Naive thymus-derived CD4-positive, alpha-beta T cell (primary cell): ENCODE measurements at regions of chr2 and their contacts with region 1.

Region 1: DNA sequence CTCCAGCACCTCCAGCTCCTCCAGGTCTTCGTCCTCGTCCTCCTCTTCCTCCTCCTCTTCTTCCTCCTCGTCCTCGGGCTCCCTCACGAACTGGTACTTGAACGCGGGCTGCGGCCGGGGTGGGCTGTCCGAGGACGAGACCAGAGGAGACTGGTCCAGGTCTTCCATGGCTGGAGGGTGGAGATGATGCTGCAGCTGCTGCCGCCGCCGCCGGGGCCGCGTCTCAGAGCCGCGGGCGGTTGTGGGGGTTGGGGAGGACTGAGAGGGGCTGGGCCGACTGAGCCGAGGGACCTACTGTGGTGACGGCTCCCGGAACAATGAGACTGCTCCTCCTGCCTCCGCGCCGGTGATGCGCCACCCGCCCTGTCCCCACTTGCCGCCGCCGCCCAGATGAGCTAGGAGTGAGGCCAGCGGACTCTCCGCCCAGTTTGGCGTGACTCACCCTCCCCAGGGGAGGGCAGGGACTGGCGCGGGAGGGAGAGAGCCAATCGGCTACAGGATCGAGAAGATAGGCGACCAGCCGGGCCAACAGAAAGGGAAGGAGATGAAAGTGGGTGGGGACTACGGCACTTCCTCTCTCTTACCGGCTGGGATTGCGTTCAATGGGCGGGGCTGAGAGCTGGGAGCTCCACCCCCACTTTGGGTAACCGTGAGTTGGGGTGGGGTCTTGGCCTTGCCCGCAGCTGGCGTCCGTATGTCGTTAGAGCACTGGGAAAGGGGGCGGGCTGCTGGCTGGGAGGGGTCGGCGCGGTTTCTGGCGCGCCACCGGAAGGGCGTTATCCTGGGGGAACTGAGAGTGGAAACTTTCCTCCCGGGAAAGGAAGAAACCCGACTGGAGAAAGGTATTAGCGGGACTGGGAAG is at the start of gene RTN4:
- DNase-seq: peak; percentile 89 to 99 (median 97)
- ATAC-seq: peak; percentile 94
- H3K4me3 ChIP-seq: peak within 1 kb of the TSS; percentile 93
- H3K4me3 Mint-ChIP-seq: peak within 1 kb of the TSS; percentile 97 to 100 (median 100)
- H3K27ac ChIP-seq: peak within 1 kb of the TSS; percentile 81
- H3K27ac Mint-ChIP-seq: peak within 1 kb of the TSS; percentile 97 to 100 (median 100)
- H3K4me1 ChIP-seq: peaks cover 31 to 38% of the 10 kb centered on the region in 2 donors
- H3K4me1 Mint-ChIP-seq: peaks cover 40 to 82% (median 68%) of the 10 kb centered on the region in 7 donors
- H3K27me3 ChIP-seq: no peaks in the 10 kb centered on the region
- H3K27me3 Mint-ChIP-seq: no peaks in the 10 kb centered on the region
- total RNA-seq, gene RTN4: 59.6 to 100 (median 65.1) TPM

Region 2: DNA sequence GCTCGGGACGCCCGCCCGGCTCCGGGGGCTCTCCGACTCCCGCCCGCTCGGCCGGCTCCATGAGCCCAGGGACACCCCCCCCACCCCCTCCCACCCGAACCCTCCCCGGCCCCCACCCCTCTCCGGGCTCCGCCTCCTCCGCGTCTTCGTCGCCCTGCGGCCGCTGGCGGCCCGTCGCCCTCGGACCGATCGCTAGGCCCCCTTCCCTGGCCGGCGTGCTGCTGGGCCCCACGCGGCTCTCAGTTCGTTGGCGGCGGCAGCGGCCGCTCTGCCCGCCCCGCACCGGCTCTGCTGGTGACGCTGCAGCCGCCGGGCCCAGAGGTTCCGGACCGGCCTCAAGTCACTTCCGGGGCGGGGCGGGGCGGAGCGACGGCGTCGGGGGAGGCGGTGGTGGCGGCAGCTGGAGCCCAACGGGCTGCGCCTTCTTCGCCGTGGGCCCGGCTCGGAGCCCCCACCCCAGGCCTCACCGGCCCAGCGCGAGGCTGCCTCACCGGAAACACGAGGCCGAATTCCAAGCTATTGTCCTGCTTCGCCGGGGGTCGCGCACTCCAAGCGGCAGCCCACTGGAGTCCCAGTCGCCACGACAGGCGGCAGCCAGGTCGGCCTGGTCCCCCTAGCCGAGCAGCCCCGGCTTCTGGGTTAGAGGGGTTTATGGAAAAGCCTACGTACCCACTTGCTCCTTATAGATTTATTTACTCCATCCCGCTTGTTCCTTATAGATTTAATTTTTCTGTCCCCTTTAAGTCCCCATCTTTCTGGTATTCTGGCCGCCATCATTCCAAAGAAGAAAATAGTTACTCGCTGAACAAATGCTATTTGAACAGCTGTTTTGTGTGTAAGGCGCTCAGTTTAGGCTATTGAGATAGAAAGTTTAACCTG is 1079.4 kb before region 1 on chr2 and contains the start of gene PSME4:
- CTCF ChIA-PET with region 1: no interaction called
- POLR2A ChIA-PET with region 1: interaction called, 3 read pairs
- intact Hi-C with region 1: loop called in 1 of 2 experiments (anchors 5 kb)
- DNase-seq: peak; percentile 80 to 95 (median 90)
- ATAC-seq: peak; percentile 97
- H3K4me3 ChIP-seq: peak within 1 kb of the TSS; percentile 84
- H3K4me3 Mint-ChIP-seq: peak within 1 kb of the TSS; percentile 89 to 100 (median 96)
- H3K27ac ChIP-seq: peak within 1 kb of the TSS; percentile 93
- H3K27ac Mint-ChIP-seq: peak within 1 kb of the TSS; percentile 91 to 99 (median 95)
- H3K4me1 ChIP-seq: peaks cover 17 to 21% of the 10 kb centered on the region in 2 donors
- H3K4me1 Mint-ChIP-seq: peaks cover 37 to 65% (median 54%) of the 10 kb centered on the region in 7 donors
- H3K27me3 ChIP-seq: no peaks in the 10 kb centered on the region
- H3K27me3 Mint-ChIP-seq: no peaks in the 10 kb centered on the region
- total RNA-seq, gene PSME4: 48.8 to 80.1 (median 54.4) TPM

Region 3: DNA sequence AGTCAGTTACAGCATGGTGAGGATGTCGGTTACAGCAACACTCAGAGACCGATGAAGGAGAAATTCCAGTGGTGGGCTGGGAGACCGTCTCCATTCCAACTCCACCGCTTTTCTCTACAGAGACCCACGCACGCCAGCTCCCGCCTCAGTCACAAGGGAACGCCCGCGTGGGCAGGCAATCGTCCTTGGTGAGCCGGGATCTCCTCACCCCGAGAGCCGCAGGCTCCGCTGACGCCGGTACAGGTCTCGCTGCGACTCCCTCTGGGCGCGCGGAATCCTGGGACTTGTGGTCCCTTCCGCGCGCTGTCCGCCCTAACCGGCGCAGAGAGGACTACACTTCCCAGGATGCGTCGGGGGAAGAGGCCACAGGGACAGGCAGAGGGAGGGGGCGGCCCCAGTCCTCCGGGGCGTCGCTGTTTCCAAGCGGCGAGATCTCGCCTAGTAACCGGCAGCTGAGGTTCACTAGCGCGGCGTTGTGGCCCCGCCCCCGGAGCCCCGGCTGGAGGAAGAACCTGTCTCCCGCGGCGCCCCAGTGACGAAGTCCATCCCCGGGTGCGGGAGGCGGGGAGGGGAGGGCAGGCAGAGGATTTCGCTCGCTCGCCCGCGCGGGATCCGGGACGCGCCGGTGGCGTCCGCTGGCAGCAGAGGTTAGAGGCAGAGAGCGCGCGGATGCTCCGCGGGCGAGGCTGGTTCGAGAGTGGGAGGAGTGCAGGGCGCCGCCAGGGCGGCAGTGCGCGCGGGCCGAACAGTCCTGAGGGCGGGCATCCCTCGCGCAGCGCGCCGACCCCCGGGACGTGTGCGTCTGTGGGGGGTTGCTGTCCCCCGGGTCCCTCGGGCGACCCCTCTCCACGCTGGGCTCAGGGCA is 327.0 kb before region 1 on chr2 and contains the start of gene EML6:
- CTCF ChIA-PET with region 1: no interaction called
- POLR2A ChIA-PET with region 1: interaction called, 6 read pairs
- intact Hi-C with region 1: loop called (anchors 1 kb)
- DNase-seq: peak; percentile 94 to 99 (median 98)
- ATAC-seq: peak; percentile 98
- H3K4me3 ChIP-seq: peak within 1 kb of the TSS; percentile 77
- H3K4me3 Mint-ChIP-seq: peak within 1 kb of the TSS; percentile 87 to 97 (median 92)
- H3K27ac ChIP-seq: peak within 1 kb of the TSS; percentile 70
- H3K27ac Mint-ChIP-seq: peak within 1 kb of the TSS; percentile 50 to 90 (median 71)
- H3K4me1 ChIP-seq: peaks cover 0 to 6% of the 10 kb centered on the region in 2 donors
- H3K4me1 Mint-ChIP-seq: peaks cover 10 to 20% (median 12%) of the 10 kb centered on the region in 7 donors
- H3K27me3 ChIP-seq: peaks cover 0 to 5% of the 10 kb centered on the region in 2 donors
- H3K27me3 Mint-ChIP-seq: peaks cover 34 to 79% (median 51%) of the 10 kb centered on the region in 5 donors
- total RNA-seq, gene EML6: 0.32 to 2.5 (median 1.5) TPM

Region 4: GRCh38 chr2:55026202-55026601 is 24.2 kb before region 1 on chr2:
- CTCF ChIA-PET with region 1: interaction called, 7 read pairs
- POLR2A ChIA-PET with region 1: interaction called, 12 read pairs
- intact Hi-C with region 1: no loop called
- DNase-seq: peak in 2 of 9 donors; percentile 30 to 37
- ATAC-seq: no peak
- H3K4me3 ChIP-seq: no peak overlapping the region
- H3K4me3 Mint-ChIP-seq: no peak overlapping the region
- H3K27ac ChIP-seq: no peak overlapping the region
- H3K27ac Mint-ChIP-seq: no peak overlapping the region
- H3K4me1 ChIP-seq: peaks cover 26 to 47% of the 10 kb centered on the region in 2 donors
- H3K4me1 Mint-ChIP-seq: peaks cover 4 to 12% (median 10%) of the 10 kb centered on the region in 7 donors
- H3K27me3 ChIP-seq: no peaks in the 10 kb centered on the region
- H3K27me3 Mint-ChIP-seq: no peaks in the 10 kb centered on the region

Region 5: GRCh38 chr2:55150834-55151233 is 100.5 kb after region 1 on chr2:
- CTCF ChIA-PET with region 1: no interaction called
- POLR2A ChIA-PET with region 1: no interaction called
- intact Hi-C with region 1: no loop called
- DNase-seq: no peak
- ATAC-seq: peak; percentile 83
- H3K4me3 ChIP-seq: no peak overlapping the region
- H3K4me3 Mint-ChIP-seq: no peak overlapping the region
- H3K27ac ChIP-seq: no peak overlapping the region
- H3K27ac Mint-ChIP-seq: no peak overlapping the region
- H3K4me1 ChIP-seq: no peaks in the 10 kb centered on the region
- H3K4me1 Mint-ChIP-seq: peaks cover 0 to 7% (median 0%) of the 10 kb centered on the region in 7 donors
- H3K27me3 ChIP-seq: no peaks in the 10 kb centered on the region
- H3K27me3 Mint-ChIP-seq: no peaks in the 10 kb centered on the region

Region 6: GRCh38 chr2:55168221-55169154 is 118.1 kb after region 1 on chr2:
- CTCF ChIA-PET with region 1: interaction called, 21 read pairs
- POLR2A ChIA-PET with region 1: interaction called, 13 read pairs
- intact Hi-C with region 1: loop called in 1 of 2 experiments (anchors 1 kb)
- DNase-seq: peak in 7 of 9 donors; percentile 21 to 53 (median 40)
- ATAC-seq: peak; percentile 78
- H3K4me3 ChIP-seq: no peak overlapping the region
- H3K4me3 Mint-ChIP-seq: no peak overlapping the region
- H3K27ac ChIP-seq: no peak overlapping the region
- H3K27ac Mint-ChIP-seq: no peak overlapping the region
- H3K4me1 ChIP-seq: no peaks in the 10 kb centered on the region
- H3K4me1 Mint-ChIP-seq: peaks cover 0 to 6% (median 0%) of the 10 kb centered on the region in 7 donors
- H3K27me3 ChIP-seq: no peaks in the 10 kb centered on the region
- H3K27me3 Mint-ChIP-seq: no peaks in the 10 kb centered on the region

Region 7: DNA sequence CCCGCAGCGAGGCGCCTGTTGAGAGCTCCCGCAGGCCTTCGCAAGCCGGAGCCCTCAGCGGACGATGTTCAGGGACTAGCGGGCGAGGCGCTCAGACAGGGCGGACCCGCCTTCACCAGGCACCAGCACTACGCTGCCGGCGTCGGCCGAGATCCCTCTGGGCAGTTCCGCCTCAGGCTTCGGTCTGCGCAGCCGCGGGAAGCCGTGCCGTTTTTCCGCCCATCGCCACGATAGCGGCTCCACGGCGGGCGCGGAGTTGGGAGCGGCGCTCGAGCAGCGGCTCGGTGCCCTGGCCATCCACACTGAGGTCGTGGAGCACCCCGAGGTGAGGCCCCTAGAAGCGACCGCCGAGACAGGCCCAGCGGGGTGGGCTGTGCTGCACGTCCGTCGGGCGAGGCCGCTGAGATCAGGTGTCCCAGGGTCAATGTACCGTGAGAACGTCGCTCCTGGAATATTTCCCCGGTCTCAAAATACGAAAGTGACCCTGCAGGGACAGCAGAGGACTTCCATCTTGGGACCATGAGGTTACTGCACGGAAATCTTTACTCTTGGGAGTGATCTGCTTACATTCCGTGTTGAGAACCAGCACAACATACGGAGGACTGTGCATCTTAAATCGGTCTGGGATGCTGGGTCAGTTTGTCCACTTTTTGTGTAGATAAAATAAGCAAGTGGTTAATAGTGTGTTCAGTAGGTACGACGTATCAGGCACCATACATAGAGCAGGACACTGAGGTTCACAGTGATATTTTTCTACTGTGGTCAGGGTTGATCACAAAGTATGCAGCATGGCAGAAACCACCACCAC is 231.9 kb after region 1 on chr2:
- CTCF ChIA-PET with region 1: no interaction called
- POLR2A ChIA-PET with region 1: interaction called, 4 read pairs
- intact Hi-C with region 1: loop called in 1 of 2 experiments (anchors 1 kb)
- DNase-seq: peak; percentile 78 to 87 (median 83)
- ATAC-seq: peak; percentile 99
- H3K4me3 ChIP-seq: peak overlapping the region; percentile 80
- H3K4me3 Mint-ChIP-seq: peak overlapping the region; percentile 87 to 97 (median 92)
- H3K27ac ChIP-seq: peak overlapping the region; percentile 93
- H3K27ac Mint-ChIP-seq: peak overlapping the region; percentile 94 to 99 (median 98)
- H3K4me1 ChIP-seq: peaks cover 0 to 4% of the 10 kb centered on the region in 2 donors
- H3K4me1 Mint-ChIP-seq: peaks cover 11 to 43% (median 29%) of the 10 kb centered on the region in 7 donors
- H3K27me3 ChIP-seq: no peaks in the 10 kb centered on the region
- H3K27me3 Mint-ChIP-seq: peaks cover 0 to 2% (median 0%) of the 10 kb centered on the region in 5 donors

Region 8: DNA sequence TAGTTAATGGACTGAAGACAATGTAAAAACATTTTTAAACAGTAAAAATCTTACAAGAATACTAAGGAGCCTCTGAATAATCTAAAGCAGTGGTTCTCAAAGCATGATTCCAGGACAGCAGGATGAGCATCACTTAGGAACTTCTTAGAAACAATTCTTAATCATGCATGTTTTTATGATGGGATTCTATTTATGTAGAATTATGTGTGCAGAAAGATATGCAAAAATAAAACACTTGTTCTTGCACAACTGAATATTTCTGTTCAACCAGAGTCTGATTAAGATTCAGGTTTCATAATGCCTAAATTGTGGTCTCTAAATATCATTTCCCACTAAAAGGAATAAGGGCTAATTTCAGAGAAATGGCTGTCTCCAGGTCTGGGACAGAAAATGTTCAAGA is 287.9 kb after region 1 on chr2:
- CTCF ChIA-PET with region 1: no interaction called
- POLR2A ChIA-PET with region 1: no interaction called
- intact Hi-C with region 1: no loop called
- DNase-seq: no peak
- ATAC-seq: no peak
- H3K4me3 ChIP-seq: no peak overlapping the region
- H3K4me3 Mint-ChIP-seq: no peak overlapping the region
- H3K27ac ChIP-seq: no peak overlapping the region
- H3K27ac Mint-ChIP-seq: no peak overlapping the region
- H3K4me1 ChIP-seq: no peaks in the 10 kb centered on the region
- H3K4me1 Mint-ChIP-seq: peaks cover 0 to 2% (median 0%) of the 10 kb centered on the region in 7 donors
- H3K27me3 ChIP-seq: no peaks in the 10 kb centered on the region
- H3K27me3 Mint-ChIP-seq: no peaks in the 10 kb centered on the region

Region 9: DNA sequence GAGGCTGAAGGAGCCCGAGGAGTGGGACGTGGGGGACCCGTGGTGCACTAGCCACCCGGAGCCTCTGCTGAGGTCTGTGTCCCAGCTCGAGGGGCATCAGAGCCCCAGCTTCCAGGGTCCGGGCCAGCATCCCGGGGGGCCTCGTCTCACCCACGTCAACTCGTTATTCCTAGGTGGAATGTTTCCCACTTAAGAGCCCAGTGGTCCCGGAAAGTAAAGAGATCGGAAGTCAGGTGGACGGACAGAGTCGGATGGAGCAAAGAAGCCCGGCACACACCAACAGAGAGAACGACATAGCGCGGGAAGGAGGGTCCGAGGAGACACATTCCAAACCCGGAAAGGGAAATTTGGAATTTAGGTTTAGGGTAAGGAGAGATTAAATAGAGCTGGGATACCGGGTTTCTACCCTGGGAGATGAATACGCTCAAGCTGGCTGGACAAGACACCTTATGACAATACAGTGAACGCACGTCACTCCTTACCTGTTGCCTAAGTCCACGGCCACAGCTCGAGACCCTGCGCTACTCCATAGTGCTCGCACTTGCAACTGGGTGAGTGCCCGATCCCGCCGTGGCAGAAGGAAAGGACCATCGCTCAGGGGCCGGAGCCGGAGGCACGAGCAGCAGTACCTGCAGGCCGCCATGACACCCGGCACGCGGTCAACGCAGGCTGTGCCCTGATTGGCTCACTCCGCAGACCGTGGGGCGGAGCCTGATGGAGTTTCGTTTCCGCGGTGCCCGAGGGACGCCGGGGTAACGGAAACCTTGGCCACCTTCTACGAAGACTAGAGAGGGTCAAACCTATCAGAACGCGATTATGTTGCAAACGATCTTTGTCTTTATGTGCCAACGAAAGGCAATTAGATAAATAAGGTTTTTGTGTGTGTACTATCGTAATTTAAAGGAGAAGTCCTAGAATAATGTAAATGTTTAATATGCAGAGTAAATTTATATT is 643.1 kb after region 1 on chr2 and contains the start of gene PNPT1:
- CTCF ChIA-PET with region 1: no interaction called
- POLR2A ChIA-PET with region 1: no interaction called
- intact Hi-C with region 1: loop called (anchors 5 to 10 kb)
- DNase-seq: peak; percentile 78 to 92 (median 90)
- ATAC-seq: peak; percentile 100
- H3K4me3 ChIP-seq: peak within 1 kb of the TSS; percentile 90
- H3K4me3 Mint-ChIP-seq: peak within 1 kb of the TSS; percentile 94 to 99 (median 97)
- H3K27ac ChIP-seq: peak within 1 kb of the TSS; percentile 72
- H3K27ac Mint-ChIP-seq: peak within 1 kb of the TSS; percentile 92 to 99 (median 96)
- H3K4me1 ChIP-seq: peaks cover 0 to 6% of the 10 kb centered on the region in 2 donors
- H3K4me1 Mint-ChIP-seq: peaks cover 18 to 50% (median 43%) of the 10 kb centered on the region in 7 donors
- H3K27me3 ChIP-seq: no peaks in the 10 kb centered on the region
- H3K27me3 Mint-ChIP-seq: peaks cover 0 to 6% (median 3%) of the 10 kb centered on the region in 5 donors
- total RNA-seq, gene PNPT1: 16.9 to 31.2 (median 18.5) TPM

Region 10: GRCh38 chr2:56068746-56069145 is 1018.4 kb after region 1 on chr2:
- CTCF ChIA-PET with region 1: no interaction called
- POLR2A ChIA-PET with region 1: no interaction called
- intact Hi-C with region 1: no loop called
- DNase-seq: no peak
- ATAC-seq: no peak
- H3K4me3 ChIP-seq: no peak overlapping the region
- H3K4me3 Mint-ChIP-seq: no peak overlapping the region
- H3K27ac ChIP-seq: no peak overlapping the region
- H3K27ac Mint-ChIP-seq: no peak overlapping the region
- H3K4me1 ChIP-seq: no peaks in the 10 kb centered on the region
- H3K4me1 Mint-ChIP-seq: no peaks in the 10 kb centered on the region
- H3K27me3 ChIP-seq: no peaks in the 10 kb centered on the region
- H3K27me3 Mint-ChIP-seq: peaks cover 0 to 8% (median 5%) of the 10 kb centered on the region in 5 donors